Activated B cell treated with CpG ODN at 0.5 μM for 24 hours (primary cell): ENCODE measurements at regions of chr1 and their contacts with region 1.

Region 1: GRCh38 chr1:178532392-178532791 is 19.5 kb downstream of the TEX35 start:
- DNase-seq: peak; percentile 77
- ATAC-seq: peak; percentile 93
- H3K4me3 Mint-ChIP-seq: no peak overlapping the region
- H3K27ac Mint-ChIP-seq: no peak overlapping the region
- H3K4me1 Mint-ChIP-seq: peaks cover 4% of the 10 kb centered on the region
- H3K27me3 Mint-ChIP-seq: no peaks in the 10 kb centered on the region
- CTCF ChIP-seq: peak; percentile 84

Region 2: GRCh38 chr1:176628775-176629174 is 1903.6 kb before region 1 on chr1:
- CTCF ChIA-PET with region 1: no interaction called
- POLR2A ChIA-PET with region 1: no interaction called
- intact Hi-C with region 1: no loop called
- DNase-seq: no peak
- ATAC-seq: no peak
- H3K4me3 Mint-ChIP-seq: no peak overlapping the region
- H3K27ac Mint-ChIP-seq: no peak overlapping the region
- H3K4me1 Mint-ChIP-seq: no peaks in the 10 kb centered on the region
- H3K27me3 Mint-ChIP-seq: no peaks in the 10 kb centered on the region
- CTCF ChIP-seq: no peak

Region 3: DNA sequence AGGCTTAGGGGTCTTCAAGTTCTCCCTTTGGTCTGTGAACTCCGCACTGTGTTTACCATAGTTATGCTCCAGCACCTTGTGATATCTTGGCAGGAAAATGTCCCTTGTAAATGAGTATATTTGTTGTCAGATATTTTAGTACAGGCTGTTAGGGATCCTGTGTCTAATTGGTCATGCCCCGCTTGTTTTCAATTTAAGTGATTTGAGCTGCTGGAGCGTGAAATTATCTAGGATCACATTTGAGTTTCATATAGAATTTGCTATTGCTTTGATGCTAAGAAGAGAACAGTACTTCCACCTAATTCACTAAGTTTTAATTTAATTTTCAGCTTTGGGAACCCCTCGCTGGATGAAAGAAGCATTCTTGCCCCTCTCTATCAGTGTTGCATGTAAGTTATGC is 534.1 kb after region 1 on chr1:
- CTCF ChIA-PET with region 1: interaction called, 3 read pairs
- POLR2A ChIA-PET with region 1: no interaction called
- intact Hi-C with region 1: loop called (anchors 1 kb)
- DNase-seq: no peak
- ATAC-seq: no peak
- H3K4me3 Mint-ChIP-seq: no peak overlapping the region
- H3K27ac Mint-ChIP-seq: no peak overlapping the region
- H3K4me1 Mint-ChIP-seq: no peaks in the 10 kb centered on the region
- H3K27me3 Mint-ChIP-seq: no peaks in the 10 kb centered on the region
- CTCF ChIP-seq: no peak

Region 4: DNA sequence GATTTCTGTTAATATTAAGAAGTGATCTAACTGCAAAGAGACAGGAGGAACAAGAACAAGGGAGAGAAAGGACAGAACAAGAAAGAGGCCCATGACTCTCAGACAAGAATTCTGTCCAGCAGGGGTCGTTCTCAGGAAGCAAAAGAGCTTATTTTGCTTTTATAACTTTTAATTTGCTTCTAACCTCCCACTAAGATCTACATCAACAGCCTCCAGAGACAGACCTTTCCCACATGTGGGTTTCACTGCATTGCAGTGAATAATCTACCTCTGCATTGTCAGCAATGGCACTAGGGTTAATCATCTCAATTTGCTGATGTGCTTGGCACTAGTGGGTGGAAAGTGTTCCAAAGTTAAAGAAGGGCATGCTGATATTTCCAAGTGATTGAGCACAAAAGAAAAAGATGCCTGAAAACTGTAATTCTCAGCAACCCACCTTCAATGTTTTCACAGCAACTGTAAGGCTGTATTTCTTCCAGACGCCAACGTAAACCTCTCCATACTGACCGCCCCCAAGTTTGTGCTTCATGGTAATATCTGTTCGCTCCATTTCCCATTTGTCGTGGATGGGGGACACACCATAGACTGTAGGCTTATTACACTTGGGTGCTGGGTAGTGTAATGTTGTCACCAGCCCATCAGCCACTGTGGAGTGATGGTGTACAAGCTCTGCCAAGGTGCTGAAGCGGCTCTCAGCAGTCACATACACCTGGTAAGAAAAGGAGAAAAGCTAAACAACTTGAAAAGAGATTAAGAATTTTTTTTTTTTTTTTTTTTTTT is 589.0 kb after region 1 on chr1:
- CTCF ChIA-PET with region 1: interaction called, 6 read pairs
- POLR2A ChIA-PET with region 1: no interaction called
- intact Hi-C with region 1: loop called (anchors 5 kb)
- DNase-seq: no peak
- ATAC-seq: peak; percentile 47
- H3K4me3 Mint-ChIP-seq: no peak overlapping the region
- H3K27ac Mint-ChIP-seq: no peak overlapping the region
- H3K4me1 Mint-ChIP-seq: peaks cover 8% of the 10 kb centered on the region
- H3K27me3 Mint-ChIP-seq: no peaks in the 10 kb centered on the region
- CTCF ChIP-seq: peak; percentile 66

Region 5: GRCh38 chr1:179194068-179194537 is 661.7 kb after region 1 on chr1:
- CTCF ChIA-PET with region 1: no interaction called
- POLR2A ChIA-PET with region 1: no interaction called
- intact Hi-C with region 1: loop called (anchors 2 kb)
- DNase-seq: no peak
- ATAC-seq: no peak
- H3K4me3 Mint-ChIP-seq: no peak overlapping the region
- H3K27ac Mint-ChIP-seq: no peak overlapping the region
- H3K4me1 Mint-ChIP-seq: peaks cover 11% of the 10 kb centered on the region
- H3K27me3 Mint-ChIP-seq: no peaks in the 10 kb centered on the region
- CTCF ChIP-seq: no peak